BJ (cell line): ENCODE measurements at regions of chr3 and their contacts with region 1.

Region 1: GRCh38 chr3:45507820-45508317 is 86.7 kb upstream of the LIMD1 start:
- DNase-seq: no peak
- H3K4me3 ChIP-seq: no peak overlapping the region
- H3K27me3 ChIP-seq: no peaks in the 10 kb centered on the region
- CTCF ChIP-seq: peak; percentile 64

Region 2: DNA sequence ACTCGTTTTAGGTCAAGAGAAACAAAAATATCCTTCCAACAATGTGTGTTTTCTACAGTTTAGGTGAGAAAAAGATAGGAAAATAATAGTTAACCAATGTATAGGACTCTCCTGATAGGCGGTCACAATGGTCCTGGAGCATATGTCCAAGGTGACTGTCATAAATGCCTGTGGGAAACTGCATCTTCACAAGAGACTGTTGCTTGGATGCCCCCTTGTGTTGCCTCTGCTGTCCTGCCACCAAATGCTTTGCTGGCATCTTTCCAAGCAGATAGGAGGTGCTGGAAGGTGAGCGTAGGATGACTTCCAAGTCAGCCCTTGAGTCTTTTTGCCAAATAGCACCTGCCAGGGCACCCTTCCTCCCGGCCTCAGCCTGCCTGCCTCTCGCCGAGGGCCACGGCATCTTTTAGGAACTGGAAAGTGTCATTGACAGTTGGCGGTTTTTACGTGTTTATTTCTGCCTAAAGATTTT is 157.3 kb after region 1 on chr3:
- CTCF ChIA-PET with region 1: interaction called, 126 read pairs
- POLR2A ChIA-PET with region 1: no interaction called
- DNase-seq: no peak
- H3K4me3 ChIP-seq: no peak overlapping the region
- H3K27me3 ChIP-seq: no peaks in the 10 kb centered on the region
- CTCF ChIP-seq: peak; percentile 36; the same call in 1 of the 2 replicates